AG04450 (cell line): ENCODE measurements at regions of chr14 and their contacts with region 1.

Region 1: GRCh38 chr14:37150414-37150813 is 22.0 kb downstream of the SLC25A21 start:
- DNase-seq: peak; percentile 13
- H3K4me3 ChIP-seq: no peak overlapping the region
- H3K27ac ChIP-seq: no peak overlapping the region
- H3K27me3 ChIP-seq: no peaks in the 10 kb centered on the region
- CTCF ChIP-seq: peak; percentile 76

Region 2: DNA sequence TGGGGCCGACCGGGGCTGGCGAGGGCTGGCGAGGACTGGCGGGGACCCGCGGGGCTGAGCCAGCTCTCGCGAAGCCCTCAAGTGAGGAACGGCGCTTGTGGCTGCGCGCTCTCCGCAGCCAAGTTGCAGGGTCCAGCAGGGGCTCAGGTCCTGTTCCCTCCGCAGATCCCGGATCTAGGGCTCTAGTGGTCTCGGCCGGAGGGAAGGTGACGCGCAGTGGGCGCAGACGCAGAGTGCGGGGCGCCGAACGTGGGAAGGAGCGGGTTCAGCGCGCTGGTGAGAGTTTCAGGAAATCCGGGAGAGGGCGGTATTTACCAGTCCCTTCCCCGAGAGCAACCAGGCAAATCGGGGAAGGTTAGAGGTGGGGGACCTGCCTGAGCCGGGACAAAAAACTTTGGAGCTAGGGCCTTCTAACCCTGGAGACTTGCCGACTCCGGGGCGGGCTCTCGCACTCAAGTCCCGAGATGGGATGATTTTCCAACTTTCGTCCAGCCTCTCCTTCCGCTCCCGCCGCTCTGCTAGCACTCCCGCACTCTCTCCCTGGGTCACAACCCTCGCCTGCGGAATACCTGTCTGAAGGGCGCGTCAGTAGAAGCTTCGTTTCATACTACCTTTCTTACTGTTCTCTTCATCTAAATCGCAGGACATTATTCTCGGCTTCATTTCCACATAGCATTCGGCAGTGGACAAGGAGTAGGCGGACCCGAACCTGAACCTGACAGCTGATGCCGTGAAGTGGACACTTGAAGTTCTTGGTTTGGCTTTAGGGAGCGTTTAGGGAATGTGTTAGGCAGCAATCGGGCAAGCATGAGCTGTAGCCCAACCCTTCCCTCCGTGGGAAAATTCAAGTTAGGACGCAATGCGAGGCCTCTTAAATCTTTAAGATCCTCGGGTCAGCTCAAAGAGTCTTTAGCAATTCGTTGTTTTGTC is 502.3 kb before region 1 on chr14:
- CTCF ChIA-PET with region 1: interaction called, 127 read pairs
- POLR2A ChIA-PET with region 1: no interaction called
- DNase-seq: no peak
- H3K4me3 ChIP-seq: peak overlapping the region; percentile 43
- H3K27ac ChIP-seq: no peak overlapping the region
- H3K27me3 ChIP-seq: peaks cover 53% of the 10 kb centered on the region
- CTCF ChIP-seq: peak; percentile 56

Region 3: GRCh38 chr14:36941783-36942521 is 208.5 kb before region 1 on chr14:
- CTCF ChIA-PET with region 1: interaction called, 39 read pairs
- POLR2A ChIA-PET with region 1: no interaction called
- DNase-seq: no peak
- H3K4me3 ChIP-seq: no peak overlapping the region
- H3K27ac ChIP-seq: no peak overlapping the region
- H3K27me3 ChIP-seq: no peaks in the 10 kb centered on the region
- CTCF ChIP-seq: peak; percentile 99

Region 4: GRCh38 chr14:37116933-37117849 is 33.2 kb before region 1 on chr14:
- CTCF ChIA-PET with region 1: interaction called, 28 read pairs
- POLR2A ChIA-PET with region 1: no interaction called
- DNase-seq: peak; percentile 8
- H3K4me3 ChIP-seq: no peak overlapping the region
- H3K27ac ChIP-seq: no peak overlapping the region
- H3K27me3 ChIP-seq: no peaks in the 10 kb centered on the region
- CTCF ChIP-seq: peak; percentile 70

Region 5: GRCh38 chr14:37139710-37140109 is 10.7 kb before region 1 on chr14:
- CTCF ChIA-PET with region 1: interaction called, 50 read pairs
- POLR2A ChIA-PET with region 1: no interaction called
- DNase-seq: no peak
- H3K4me3 ChIP-seq: no peak overlapping the region
- H3K27ac ChIP-seq: no peak overlapping the region
- H3K27me3 ChIP-seq: no peaks in the 10 kb centered on the region
- CTCF ChIP-seq: no peak

Region 6: GRCh38 chr14:37210448-37210847 is 60.0 kb after region 1 on chr14:
- CTCF ChIA-PET with region 1: no interaction called
- POLR2A ChIA-PET with region 1: no interaction called
- DNase-seq: no peak
- H3K4me3 ChIP-seq: no peak overlapping the region
- H3K27ac ChIP-seq: no peak overlapping the region
- H3K27me3 ChIP-seq: no peaks in the 10 kb centered on the region
- CTCF ChIP-seq: no peak

Region 7: GRCh38 chr14:37230551-37231194 is 80.3 kb after region 1 on chr14:
- CTCF ChIA-PET with region 1: interaction called, 11 read pairs
- POLR2A ChIA-PET with region 1: no interaction called
- DNase-seq: peak; percentile 38
- H3K4me3 ChIP-seq: no peak overlapping the region
- H3K27ac ChIP-seq: no peak overlapping the region
- H3K27me3 ChIP-seq: no peaks in the 10 kb centered on the region
- CTCF ChIP-seq: peak; percentile 76